WTC11 (cell line): ENCODE measurements at regions of chr11 and their contacts with region 1.

Region 1: GRCh38 chr11:86041975-86042378 is 26.9 kb downstream of the PICALM start:
- DNase-seq: peak; percentile 63
- ATAC-seq: peak; percentile 92
- H3K4me3 Mint-ChIP-seq: no peak overlapping the region
- H3K27ac Mint-ChIP-seq: peak overlapping the region; percentile 42; the same call in 1 of the 2 replicates
- H3K4me1 Mint-ChIP-seq: peaks cover 39% of the 10 kb centered on the region
- H3K27me3 Mint-ChIP-seq: no peaks in the 10 kb centered on the region
- CTCF ChIP-seq: peak; percentile 94

Region 2: DNA sequence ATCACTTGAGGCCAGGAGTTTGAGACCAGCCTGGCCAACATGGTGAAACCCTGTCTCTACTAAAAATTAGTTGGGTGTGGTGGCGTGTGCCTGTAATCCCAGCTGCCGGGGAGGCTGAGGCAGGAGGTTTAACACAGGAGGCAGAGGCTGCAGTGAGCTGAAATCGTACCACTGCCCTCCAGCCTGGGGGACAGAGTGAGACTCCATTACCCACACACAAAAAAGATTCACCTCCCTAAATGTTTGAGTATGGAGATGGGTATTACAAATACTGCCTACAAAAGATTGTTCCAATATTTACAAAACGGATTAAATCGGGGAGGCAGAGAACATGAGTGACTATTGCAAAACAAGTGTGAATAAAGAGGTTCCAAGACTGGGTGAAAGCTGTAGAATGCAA is 71.4 kb before region 1 on chr11:
- CTCF ChIA-PET with region 1: interaction called, 10 read pairs
- POLR2A ChIA-PET with region 1: no interaction called
- DNase-seq: no peak
- ATAC-seq: no peak
- H3K4me3 Mint-ChIP-seq: no peak overlapping the region
- H3K27ac Mint-ChIP-seq: no peak overlapping the region
- H3K4me1 Mint-ChIP-seq: peaks cover 18% of the 10 kb centered on the region
- H3K27me3 Mint-ChIP-seq: no peaks in the 10 kb centered on the region
- CTCF ChIP-seq: no peak

Region 3: GRCh38 chr11:86015699-86016098 is 26.3 kb before region 1 on chr11:
- CTCF ChIA-PET with region 1: interaction called, 13 read pairs
- POLR2A ChIA-PET with region 1: no interaction called
- DNase-seq: no peak
- ATAC-seq: no peak
- H3K4me3 Mint-ChIP-seq: no peak overlapping the region
- H3K27ac Mint-ChIP-seq: peak overlapping the region; percentile 35; the same call in 1 of the 2 replicates
- H3K4me1 Mint-ChIP-seq: no peaks in the 10 kb centered on the region
- H3K27me3 Mint-ChIP-seq: no peaks in the 10 kb centered on the region
- CTCF ChIP-seq: no peak

Region 4: DNA sequence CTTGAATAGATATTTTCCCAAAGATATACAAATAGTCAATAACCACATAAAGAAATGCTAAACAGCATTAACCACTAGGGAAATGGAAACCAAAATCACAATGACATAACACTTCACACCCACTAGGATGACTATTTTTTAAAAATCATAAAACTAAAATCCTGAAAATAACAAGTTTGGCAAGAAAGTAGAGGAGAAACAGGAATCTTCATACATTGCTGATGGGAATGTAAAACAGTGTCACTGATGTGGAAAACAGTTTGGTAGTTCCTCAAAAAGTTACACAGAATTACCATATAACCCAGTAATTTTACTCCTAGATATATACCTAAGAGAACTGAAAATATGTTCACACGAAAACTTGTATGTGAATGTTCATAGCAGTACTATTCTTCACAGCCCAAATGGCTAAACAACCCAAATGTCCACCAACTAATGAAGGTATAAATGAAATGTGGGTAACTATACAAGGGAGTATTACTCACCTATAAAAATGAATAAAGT is 14.4 kb after region 1 on chr11:
- CTCF ChIA-PET with region 1: interaction called, 46 read pairs
- POLR2A ChIA-PET with region 1: interaction called, 3 read pairs
- DNase-seq: no peak
- ATAC-seq: no peak
- H3K4me3 Mint-ChIP-seq: no peak overlapping the region
- H3K27ac Mint-ChIP-seq: no peak overlapping the region
- H3K4me1 Mint-ChIP-seq: peaks cover 52% of the 10 kb centered on the region
- H3K27me3 Mint-ChIP-seq: no peaks in the 10 kb centered on the region
- CTCF ChIP-seq: no peak

Region 5: GRCh38 chr11:86068951-86069407 is 27.0 kb after region 1 on chr11 and contains the start of gene PICALM:
- CTCF ChIA-PET with region 1: interaction called, 35 read pairs
- POLR2A ChIA-PET with region 1: interaction called, 4 read pairs
- DNase-seq: peak; percentile 98
- ATAC-seq: peak; percentile 79
- H3K4me3 Mint-ChIP-seq: peak within 1 kb of the TSS; percentile 99
- H3K27ac Mint-ChIP-seq: peak within 1 kb of the TSS; percentile 98
- H3K4me1 Mint-ChIP-seq: peaks cover 40% of the 10 kb centered on the region
- H3K27me3 Mint-ChIP-seq: no peaks in the 10 kb centered on the region
- CTCF ChIP-seq: no peak
- total RNA-seq, gene PICALM: 64.4 to 69.9 TPM (median 65.1 TPM) in 3 replicates

Region 6: DNA sequence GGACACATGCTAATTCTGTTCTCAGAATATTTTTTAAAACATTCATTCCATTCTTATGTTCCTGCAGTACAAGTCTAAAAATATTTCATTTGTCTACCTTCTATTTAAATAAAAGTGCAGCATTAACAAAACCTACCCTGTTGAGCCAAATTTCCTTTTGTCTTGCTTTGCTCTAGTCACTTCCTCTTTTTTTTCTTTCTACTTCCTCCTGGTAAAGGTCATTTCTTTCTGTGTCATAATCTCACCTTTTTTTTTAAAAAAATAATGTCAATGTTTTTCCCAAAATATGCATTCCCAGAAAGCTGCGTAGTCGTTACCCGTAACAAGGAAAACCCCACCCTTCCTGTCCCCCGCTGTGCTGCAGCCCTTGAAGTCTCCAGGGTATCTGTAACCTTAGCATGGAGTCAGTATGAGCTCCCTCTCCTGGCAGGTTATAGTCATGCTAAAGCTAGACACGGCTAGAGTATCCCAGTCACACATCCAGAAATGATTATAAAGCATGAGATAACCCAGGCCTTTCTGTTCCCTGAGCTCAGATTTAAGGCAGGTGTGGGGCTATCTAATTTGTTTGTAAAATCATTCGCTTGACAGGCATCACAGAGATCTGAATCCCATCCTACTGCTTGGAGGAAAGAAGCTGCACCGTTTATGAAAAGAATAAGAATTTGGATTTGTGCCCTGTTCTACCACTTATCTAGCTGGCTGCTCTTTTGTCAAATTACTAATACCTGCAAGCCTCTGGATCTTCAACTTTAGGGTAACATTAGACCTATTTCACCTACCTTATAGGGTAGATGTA is 151.5 kb after region 1 on chr11:
- CTCF ChIA-PET with region 1: interaction called, 41 read pairs
- POLR2A ChIA-PET with region 1: interaction called, 3 read pairs
- DNase-seq: peak; percentile 82
- ATAC-seq: peak; percentile 100
- H3K4me3 Mint-ChIP-seq: peak overlapping the region; percentile 47
- H3K27ac Mint-ChIP-seq: no peak overlapping the region
- H3K4me1 Mint-ChIP-seq: peaks cover 9% of the 10 kb centered on the region
- H3K27me3 Mint-ChIP-seq: peaks cover 8% of the 10 kb centered on the region
- CTCF ChIP-seq: peak; percentile 54